ENCODE measurements at regions of chr17 and their contacts with region 1.

Region 1: DNA sequence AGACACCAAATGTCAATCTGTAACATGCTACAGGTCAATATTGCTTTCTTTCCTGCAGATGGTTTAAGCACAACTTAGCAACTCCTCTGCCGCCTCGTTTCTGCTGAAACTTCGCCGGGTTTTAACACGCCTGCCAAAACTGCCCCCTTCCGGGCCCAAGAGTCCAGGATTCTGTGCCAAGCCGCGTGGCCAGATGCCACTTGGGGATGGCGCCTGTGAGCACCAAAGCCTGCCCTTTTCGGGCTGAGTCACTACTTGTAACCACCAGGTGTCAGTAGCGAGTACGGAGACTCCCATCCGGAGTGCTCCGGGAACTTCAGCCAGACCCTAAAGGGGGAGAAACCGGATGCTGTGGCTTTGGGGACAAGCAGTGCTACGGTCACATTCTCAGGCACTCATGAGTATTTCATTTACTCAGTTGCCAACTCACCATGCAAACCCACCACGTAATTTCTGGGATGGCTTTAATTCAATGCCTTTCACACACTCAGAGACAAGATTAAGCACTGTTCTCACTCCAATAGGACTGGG is 7.8 kb downstream of the PMP22 start:
- DNase-seq: peak; percentile 44
- H3K4me3 ChIP-seq: no peak overlapping the region
- H3K27me3 ChIP-seq: no peaks in the 10 kb centered on the region
- CTCF ChIP-seq: peak; percentile 91

Region 2: DNA sequence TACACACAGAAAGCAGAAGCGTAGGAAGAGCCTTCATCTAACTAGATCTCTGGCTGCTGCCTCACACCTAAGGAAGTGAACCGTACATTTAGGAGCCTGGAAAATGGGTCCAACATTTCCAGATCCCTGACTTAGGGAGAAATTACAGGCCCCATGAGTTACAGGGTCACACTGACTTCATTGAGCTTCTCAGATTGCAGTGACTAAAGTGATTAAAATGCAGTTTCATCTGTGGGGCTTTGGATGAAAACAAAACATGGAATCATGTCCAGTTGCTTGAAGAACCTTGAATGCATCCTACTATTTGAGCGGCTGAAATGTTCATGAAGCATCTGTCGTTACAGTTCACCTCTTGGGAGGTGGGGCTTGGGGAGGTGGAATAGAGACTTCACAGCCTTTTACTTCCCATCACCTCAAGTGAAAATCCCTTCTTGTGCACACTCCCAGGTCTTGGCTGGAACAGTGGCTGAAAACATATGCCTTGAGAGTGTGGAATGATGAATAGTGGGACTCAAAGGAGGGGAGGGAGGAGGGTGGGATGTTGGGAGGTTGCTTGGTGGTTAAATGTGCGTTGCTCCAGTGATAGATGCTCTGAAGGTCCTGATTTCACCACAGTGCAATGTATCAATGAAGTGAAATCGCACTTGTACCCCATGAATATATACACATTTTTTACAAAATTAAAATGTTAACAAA is 64.4 kb after region 1 on chr17:
- CTCF ChIA-PET with region 1: no interaction called
- POLR2A ChIA-PET with region 1: no interaction called
- DNase-seq: no peak
- H3K4me3 ChIP-seq: no peak overlapping the region
- H3K27me3 ChIP-seq: peaks cover 3% of the 10 kb centered on the region; the same call in 1 of the 2 replicates
- CTCF ChIP-seq: no peak

Region 3: DNA sequence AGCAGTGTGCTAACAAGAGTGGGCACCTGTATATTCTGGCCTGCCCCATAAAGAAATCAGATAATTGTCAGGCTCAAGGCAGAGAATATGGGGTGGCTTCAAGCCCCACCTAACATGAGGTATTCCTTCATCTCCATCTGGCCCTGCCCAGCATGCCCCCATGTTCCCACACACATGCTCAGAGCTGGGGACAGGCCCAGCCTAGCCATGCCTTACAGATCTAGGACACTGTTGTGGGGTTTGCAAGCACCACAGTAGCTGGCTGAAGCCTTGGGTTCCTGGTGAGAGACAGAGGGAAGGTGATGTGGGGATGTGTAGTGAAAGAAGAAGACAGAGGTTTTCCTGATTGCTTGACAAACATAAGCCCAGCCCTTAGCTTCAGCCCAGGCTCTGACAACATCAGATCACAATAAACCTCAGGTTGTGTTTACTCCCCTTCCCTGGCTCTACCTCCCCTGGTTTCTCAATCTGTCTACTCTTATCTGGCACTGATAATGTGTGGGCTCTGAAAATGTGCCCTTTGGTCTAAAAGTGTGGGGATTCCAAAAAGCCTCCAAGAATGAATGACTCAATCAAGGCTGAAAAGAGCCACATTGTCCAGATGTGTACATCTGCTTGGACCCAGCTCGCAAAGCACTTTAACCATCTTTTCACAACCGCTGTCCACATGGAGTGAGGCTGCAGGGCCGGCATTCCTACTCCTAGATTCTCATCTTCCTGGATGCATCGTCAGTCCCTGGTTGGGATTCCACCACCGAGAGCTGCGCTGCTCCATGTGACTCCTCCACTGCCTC is 175.7 kb after region 1 on chr17:
- CTCF ChIA-PET with region 1: interaction called, 12 read pairs
- POLR2A ChIA-PET with region 1: no interaction called
- DNase-seq: no peak
- H3K4me3 ChIP-seq: no peak overlapping the region
- H3K27me3 ChIP-seq: no peaks in the 10 kb centered on the region
- CTCF ChIP-seq: no peak

Region 4: DNA sequence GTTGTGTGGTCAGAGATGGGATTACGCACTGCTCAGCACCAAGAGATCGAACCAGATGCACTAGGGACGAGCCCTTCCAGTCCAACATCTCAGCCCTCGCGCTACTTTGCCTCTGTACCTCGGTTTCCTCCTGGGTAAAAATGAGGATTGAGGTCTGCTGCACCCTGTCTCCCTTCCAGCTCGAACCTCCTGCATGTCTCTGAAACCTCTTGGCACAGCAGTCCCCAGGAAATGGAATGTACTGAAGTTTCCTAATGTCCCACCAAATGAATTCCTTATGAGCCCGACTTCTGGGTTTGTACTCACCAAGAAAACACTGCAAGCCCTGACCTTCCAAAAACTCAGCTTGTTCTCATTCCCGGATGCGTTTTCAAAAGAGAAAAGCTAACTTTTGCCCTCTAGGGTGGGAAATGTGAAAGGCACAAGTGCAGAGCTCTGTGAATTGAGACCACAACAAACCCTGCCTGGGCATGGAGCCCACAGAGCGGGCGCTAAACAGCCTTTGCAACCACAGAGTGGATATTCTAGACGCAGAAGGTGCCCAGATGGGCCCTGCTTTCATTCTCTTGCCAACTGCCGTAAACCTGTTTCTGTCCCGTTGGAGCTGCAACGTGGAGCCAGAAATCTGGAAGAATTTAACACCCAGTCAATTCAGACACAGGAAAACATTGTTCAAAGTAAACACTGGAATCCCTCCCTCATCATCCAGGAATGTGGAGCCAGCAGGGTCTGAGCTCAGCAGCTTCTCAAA is 199.8 kb after region 1 on chr17:
- CTCF ChIA-PET with region 1: interaction called, 11 read pairs
- POLR2A ChIA-PET with region 1: no interaction called
- DNase-seq: peak; percentile 93
- H3K4me3 ChIP-seq: no peak overlapping the region
- H3K27me3 ChIP-seq: no peaks in the 10 kb centered on the region
- CTCF ChIP-seq: peak; percentile 64

Region 5: DNA sequence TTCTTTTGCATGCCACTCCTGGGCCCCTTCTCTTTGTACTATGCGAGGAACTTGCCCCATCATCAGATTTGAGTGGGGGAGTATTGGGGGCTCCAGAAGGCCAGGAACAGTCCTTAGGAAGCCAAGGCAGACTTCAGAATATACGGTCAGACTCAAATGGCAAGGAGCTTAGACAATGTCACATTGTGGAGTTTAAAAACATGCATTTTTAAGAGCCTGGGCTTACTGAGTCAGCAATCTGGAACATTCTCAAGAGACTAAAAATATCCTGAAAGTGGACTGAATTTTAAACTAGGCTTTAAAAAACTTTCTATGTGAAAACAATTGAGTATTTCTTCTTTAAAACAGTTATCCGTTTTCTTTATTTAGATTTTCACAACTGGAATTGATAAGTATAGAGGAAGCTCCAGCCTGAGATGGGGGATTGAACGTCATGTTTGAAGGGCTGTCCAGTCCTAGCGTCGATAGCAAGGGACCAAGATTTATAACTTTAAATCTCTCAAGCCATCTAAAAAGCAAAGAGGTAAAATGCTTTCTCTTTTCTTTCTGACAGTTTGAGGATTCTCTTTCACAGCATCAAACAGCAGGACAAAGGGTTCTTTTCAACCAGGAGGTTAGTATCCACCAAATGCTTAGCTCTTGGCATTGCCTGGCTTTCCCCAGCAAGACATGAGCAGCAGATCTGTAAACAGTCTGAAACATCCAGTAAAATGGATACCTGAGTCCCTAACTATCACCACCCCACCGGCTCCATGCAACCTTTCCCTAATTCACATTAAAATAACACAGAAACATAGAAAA is 255.9 kb after region 1 on chr17:
- CTCF ChIA-PET with region 1: interaction called, 12 read pairs
- POLR2A ChIA-PET with region 1: no interaction called
- DNase-seq: no peak
- H3K4me3 ChIP-seq: no peak overlapping the region
- H3K27me3 ChIP-seq: no peaks in the 10 kb centered on the region
- CTCF ChIP-seq: no peak